ENCODE measurements at regions of chr4 and their contacts with region 1.

Region 1: DNA sequence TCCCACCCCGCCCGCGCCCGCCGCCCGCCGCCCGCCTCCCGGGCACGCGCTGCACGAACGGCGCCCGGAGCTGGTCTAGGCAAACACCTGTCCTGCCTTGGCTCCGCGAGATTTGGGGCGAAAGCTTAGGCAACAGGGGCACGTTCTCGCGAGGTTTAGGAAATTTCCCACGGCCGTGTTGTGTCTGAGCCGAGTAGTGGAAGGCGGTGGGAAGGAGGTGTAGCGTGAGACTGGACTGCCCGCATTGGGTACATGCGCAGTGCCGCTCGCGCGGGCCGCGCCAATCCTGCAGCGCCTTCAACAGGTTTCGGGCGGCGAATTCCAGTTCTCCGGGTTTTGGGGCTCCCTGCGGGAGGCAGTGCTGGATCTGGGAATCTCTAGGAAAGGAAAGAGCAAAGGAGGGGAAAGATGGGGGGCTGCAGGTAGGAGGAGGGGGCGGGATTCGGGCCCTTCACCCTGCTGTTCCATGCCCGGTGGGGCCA is 1.3 kb upstream of the RBPJ start:
- DNase-seq: peak; percentile 98
- H3K4me3 Mint-ChIP-seq: peak overlapping the region; percentile 94
- H3K27ac Mint-ChIP-seq: peak overlapping the region; percentile 100
- H3K4me1 Mint-ChIP-seq: peaks cover 33% of the 10 kb centered on the region
- H3K27me3 Mint-ChIP-seq: peaks cover 2% of the 10 kb centered on the region

Region 2: GRCh38 chr4:25862411-25863346 is 456.8 kb before region 1 on chr4 and contains the start of gene SEL1L3:
- intact Hi-C with region 1: loop called (anchors 5 kb)
- DNase-seq: peak; percentile 37
- H3K4me3 Mint-ChIP-seq: peak within 1 kb of the TSS; percentile 99
- H3K27ac Mint-ChIP-seq: peak within 1 kb of the TSS; percentile 99
- H3K4me1 Mint-ChIP-seq: peaks cover 42% of the 10 kb centered on the region
- H3K27me3 Mint-ChIP-seq: no peaks in the 10 kb centered on the region
- total RNA-seq, gene SEL1L3: 36.0 and 37.1 TPM in 2 replicates

Region 3: GRCh38 chr4:25993395-25994185 is 325.9 kb before region 1 on chr4:
- intact Hi-C with region 1: loop called (anchors 1 kb)
- DNase-seq: no peak
- H3K4me3 Mint-ChIP-seq: no peak overlapping the region
- H3K27ac Mint-ChIP-seq: no peak overlapping the region
- H3K4me1 Mint-ChIP-seq: peaks cover 13% of the 10 kb centered on the region
- H3K27me3 Mint-ChIP-seq: peaks cover 2% of the 10 kb centered on the region

Region 4: DNA sequence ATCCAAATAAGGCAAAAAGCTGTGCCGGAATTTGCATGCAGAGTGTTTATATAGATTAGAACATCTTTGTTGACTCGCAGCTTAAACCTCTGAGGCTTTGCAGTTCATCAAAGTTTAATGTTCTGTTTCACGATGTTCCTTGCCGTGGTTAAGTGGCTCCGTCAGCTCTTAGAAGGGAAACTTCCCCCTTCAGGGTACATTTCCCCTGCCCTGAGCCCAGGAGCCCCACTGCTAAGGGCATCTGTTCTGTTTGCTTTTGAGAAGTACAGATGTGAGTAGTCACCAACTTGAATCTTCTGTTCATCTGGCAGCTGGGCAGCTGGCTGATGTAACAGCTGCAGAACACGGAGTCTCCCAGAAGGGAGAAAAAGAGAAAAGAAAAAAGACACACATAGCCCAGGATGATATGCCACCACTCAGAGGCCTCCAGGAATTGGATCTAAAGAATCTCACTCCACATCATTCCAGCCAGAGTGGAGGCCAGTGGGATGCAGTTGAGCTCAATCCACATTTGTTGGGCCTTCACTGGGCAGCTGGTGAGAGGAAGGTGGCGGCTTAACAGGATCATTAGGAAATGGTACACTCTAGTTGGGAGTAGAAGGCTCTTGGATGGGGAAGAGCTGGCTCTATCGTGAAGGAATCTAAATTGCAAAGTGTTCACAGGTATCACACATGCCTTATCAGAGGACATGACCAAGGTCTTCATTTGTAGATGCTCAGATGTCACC is 177.4 kb before region 1 on chr4:
- intact Hi-C with region 1: loop called (anchors 1 kb)
- DNase-seq: no peak
- H3K4me3 Mint-ChIP-seq: peak overlapping the region; percentile 3
- H3K27ac Mint-ChIP-seq: peak overlapping the region; percentile 78
- H3K4me1 Mint-ChIP-seq: peaks cover 67% of the 10 kb centered on the region
- H3K27me3 Mint-ChIP-seq: no peaks in the 10 kb centered on the region

Region 5: GRCh38 chr4:26307037-26307800 is 12.3 kb before region 1 on chr4:
- intact Hi-C with region 1: loop called (anchors 1 kb)
- DNase-seq: no peak
- H3K4me3 Mint-ChIP-seq: peak overlapping the region; percentile 23
- H3K27ac Mint-ChIP-seq: peak overlapping the region; percentile 88
- H3K4me1 Mint-ChIP-seq: peaks cover 36% of the 10 kb centered on the region
- H3K27me3 Mint-ChIP-seq: no peaks in the 10 kb centered on the region

Region 6: DNA sequence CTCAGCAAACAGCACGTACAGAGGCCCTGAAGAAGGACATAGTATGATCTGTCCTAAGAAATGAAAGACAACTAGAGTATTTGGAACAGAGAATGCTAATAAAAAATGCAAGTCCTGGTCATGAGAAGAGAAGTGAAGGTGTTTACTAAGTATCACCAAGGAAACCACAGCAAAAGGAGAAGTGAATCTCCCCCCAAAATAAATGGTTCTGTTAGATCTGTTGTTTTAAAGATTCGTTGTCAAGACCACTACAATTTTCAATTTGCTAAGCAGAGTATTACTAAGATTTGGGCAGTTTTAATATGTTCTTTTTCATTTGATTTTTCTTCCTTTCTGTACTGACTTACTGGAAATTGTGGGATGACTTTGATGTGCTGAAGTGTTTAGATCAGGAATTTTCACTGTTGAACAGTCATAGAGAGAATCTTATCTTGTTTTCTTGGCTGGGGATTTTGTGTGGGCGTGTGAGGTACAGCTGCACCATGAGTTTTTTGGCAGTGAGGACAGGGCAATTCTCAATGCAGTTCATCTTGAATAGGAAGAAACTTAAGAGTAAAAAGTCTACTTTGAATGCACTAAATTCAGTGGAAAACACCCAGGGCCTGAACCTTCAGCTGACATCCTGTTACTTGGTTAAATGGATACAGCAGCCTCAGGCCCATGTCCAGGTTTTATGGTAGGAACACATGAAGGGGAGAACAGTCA is 673.3 kb after region 1 on chr4:
- intact Hi-C with region 1: loop called (anchors 10 kb)
- DNase-seq: no peak
- H3K4me3 Mint-ChIP-seq: no peak overlapping the region
- H3K27ac Mint-ChIP-seq: no peak overlapping the region
- H3K4me1 Mint-ChIP-seq: peaks cover 24% of the 10 kb centered on the region
- H3K27me3 Mint-ChIP-seq: no peaks in the 10 kb centered on the region

Measured in activated T-helper 1 cell treated with anti-CD3 and anti-CD28 coated beads, Interleukin-12 subunit alpha, Interleukin-12 subunit beta, Interleukin-2, Interleukin-4 antibody, amounts not matched to agents 30 ng/mL and 10 ng/mL and 1 ng/mL, durations not matched to agents 14 hours and 24 hours and 36 hours (primary cell).